Activated CD4-positive, alpha-beta T cell treated with anti-CD3 and anti-CD28 coated beads, Interleukin-2, amount 10 ng/mL, durations not matched to agents 7 days and 5 days (primary cell): ENCODE measurements at regions of chr16 and their contacts with region 1.

Region 1: DNA sequence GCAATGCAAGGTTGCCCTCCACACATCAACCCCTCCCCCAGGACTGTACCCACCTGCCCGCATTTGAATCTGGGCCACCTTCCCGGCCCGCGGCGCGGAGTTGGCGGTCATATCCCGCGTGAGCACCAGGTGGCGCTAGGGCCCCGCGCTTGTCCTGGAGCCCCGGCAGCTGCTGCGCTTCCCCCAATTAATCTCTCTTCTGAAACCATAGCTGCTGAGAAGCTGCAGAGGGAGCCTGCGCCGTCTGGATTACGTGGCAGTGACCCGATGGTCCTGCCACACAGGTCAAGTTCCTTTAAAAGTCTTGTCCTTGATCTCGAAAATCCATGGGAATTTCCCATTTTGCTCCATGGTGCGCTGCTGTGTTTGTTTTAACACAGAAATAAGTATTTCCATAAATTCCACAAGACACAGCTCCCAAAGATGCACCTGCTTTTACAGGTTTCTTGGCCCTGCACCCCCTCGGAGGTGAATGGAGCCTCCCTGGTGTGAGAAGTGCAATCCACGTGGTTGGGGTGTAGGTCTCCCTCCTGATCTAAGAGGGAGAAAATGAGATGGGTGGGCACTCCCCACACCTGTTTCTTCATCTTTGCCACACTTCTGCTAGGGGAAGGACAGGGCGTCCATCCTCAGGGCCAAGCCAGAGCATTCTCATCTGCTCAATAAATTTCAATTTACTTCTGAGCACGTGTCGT is 22.1 kb downstream of the COX4I1 start:
- DNase-seq: peak; percentile 73
- H3K4me3 Mint-ChIP-seq: no peak overlapping the region
- H3K27ac Mint-ChIP-seq: no peak overlapping the region
- H3K4me1 Mint-ChIP-seq: peaks cover 4% of the 10 kb centered on the region
- H3K27me3 Mint-ChIP-seq: peaks cover 3% of the 10 kb centered on the region

Region 2: GRCh38 chr16:85799497-85800337 is 21.9 kb before region 1 on chr16 and contains the starts of genes COX4I1 and EMC8:
- CTCF ChIA-PET with region 1: interaction called, 16 read pairs
- POLR2A ChIA-PET with region 1: interaction called, 4 read pairs
- DNase-seq: peak; percentile 94
- H3K4me3 Mint-ChIP-seq: peak within 1 kb of the TSS; percentile 86
- H3K27ac Mint-ChIP-seq: peak within 1 kb of the TSS; percentile 92
- H3K4me1 Mint-ChIP-seq: peaks cover 63% of the 10 kb centered on the region
- H3K27me3 Mint-ChIP-seq: no peaks in the 10 kb centered on the region
- total RNA-seq, gene COX4I1: 461 to 486 TPM
- total RNA-seq, gene EMC8: 24.0 to 27.6 TPM

Region 3: DNA sequence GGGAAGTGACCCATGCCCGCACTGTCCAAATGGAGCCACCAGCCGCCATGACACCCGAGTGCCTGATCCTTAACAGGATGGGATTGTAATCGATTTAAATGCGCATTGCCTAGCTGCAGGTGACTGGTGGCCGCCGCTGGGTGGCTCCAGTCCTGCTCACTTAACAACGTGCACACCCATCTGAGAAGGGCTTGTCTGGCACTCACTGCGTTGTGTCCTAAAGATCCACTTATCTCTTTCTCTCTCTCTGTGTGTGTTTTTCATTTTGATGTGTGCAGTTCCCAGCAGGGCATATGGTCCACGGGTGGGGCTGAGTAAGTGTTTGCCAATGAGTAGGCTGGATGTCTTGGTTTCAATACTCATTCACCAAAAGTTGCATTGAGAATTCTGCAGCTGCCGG is 158.0 kb after region 1 on chr16:
- CTCF ChIA-PET with region 1: interaction called, 53 read pairs
- POLR2A ChIA-PET with region 1: no interaction called
- DNase-seq: no peak
- H3K4me3 Mint-ChIP-seq: no peak overlapping the region
- H3K27ac Mint-ChIP-seq: no peak overlapping the region
- H3K4me1 Mint-ChIP-seq: peaks cover 5% of the 10 kb centered on the region
- H3K27me3 Mint-ChIP-seq: no peaks in the 10 kb centered on the region

Region 4: DNA sequence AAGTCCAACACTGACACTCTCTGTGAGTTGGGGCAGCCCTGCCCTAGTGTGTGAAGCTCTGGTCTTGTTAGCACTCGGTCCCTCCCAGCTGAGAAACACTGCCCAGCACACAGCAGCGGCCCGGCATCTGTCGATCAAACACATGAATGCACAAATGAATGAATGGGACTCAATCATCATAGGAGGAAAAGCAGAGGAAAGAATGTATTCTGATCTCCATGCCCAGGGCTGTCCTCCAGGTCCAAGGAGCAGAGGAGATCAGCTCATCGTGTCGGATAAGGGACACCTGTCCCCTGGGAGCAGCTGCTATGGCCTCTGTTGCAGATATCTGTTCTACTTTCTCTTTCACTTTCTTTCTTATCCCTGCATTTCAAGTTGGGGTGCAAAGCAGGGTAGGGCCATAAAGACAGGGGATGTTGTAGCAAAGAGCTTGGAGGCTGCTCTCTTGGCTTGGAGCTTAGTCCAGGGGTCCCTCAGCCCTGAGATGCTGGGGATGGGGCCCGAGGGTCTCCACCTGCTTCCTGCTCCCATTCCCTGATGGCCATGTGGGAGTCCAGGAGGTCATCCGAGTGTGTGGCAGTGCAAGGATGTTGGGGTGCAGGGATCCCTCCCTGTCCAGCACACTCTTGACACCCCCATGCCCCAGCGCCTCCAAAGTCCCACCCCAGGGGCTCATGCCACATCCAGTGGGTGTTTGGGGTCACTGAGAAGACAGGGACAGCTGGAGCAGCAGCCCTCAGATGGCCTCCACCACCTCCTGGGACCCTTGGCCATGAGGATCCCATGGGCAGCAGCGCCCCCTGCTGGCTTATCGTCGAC is 165.6 kb after region 1 on chr16:
- CTCF ChIA-PET with region 1: interaction called, 53 read pairs
- POLR2A ChIA-PET with region 1: interaction called, 4 read pairs
- DNase-seq: peak; percentile 27
- H3K4me3 Mint-ChIP-seq: no peak overlapping the region
- H3K27ac Mint-ChIP-seq: peak overlapping the region; percentile 57
- H3K4me1 Mint-ChIP-seq: peaks cover 54% of the 10 kb centered on the region
- H3K27me3 Mint-ChIP-seq: no peaks in the 10 kb centered on the region

Region 5: GRCh38 chr16:86016201-86016871 is 194.7 kb after region 1 on chr16:
- CTCF ChIA-PET with region 1: interaction called, 27 read pairs
- POLR2A ChIA-PET with region 1: no interaction called
- DNase-seq: peak; percentile 47
- H3K4me3 Mint-ChIP-seq: no peak overlapping the region
- H3K27ac Mint-ChIP-seq: no peak overlapping the region
- H3K4me1 Mint-ChIP-seq: no peaks in the 10 kb centered on the region
- H3K27me3 Mint-ChIP-seq: peaks cover 21% of the 10 kb centered on the region

Region 6: DNA sequence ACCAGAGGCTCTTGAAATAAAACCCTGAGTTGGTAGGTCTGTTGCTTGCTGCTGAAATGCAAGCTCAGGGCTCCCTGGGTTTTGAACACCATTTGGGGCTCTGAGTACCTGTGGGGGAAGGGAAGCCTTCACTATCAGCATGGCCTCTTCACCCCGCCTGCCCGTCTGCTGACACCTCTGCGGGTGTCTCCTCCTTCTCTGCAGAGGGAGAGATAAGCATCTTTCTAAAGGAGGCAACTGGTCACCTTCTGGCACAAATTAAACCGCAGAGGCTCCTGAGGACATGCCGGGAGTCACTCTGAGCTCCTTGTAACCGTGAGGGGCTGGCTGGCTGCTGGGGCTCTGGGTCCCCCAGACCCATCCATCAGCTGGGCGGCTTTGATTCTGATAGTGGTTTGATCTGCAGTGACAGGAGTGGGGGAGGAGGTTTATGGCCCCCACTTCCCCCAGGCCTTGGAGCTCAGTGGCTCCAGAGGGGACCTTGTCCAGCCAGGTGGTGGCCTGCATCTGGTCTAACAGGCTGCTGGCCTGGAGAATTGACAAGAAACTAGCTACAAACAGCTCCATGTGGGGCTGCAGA is 200.9 kb after region 1 on chr16:
- CTCF ChIA-PET with region 1: interaction called, 27 read pairs
- POLR2A ChIA-PET with region 1: no interaction called
- DNase-seq: no peak
- H3K4me3 Mint-ChIP-seq: no peak overlapping the region
- H3K27ac Mint-ChIP-seq: no peak overlapping the region
- H3K4me1 Mint-ChIP-seq: no peaks in the 10 kb centered on the region
- H3K27me3 Mint-ChIP-seq: peaks cover 21% of the 10 kb centered on the region